Heart right ventricle (tissue), 16 donors: ENCODE measurements at regions of chr17 and their contacts with region 1.

Region 1: DNA sequence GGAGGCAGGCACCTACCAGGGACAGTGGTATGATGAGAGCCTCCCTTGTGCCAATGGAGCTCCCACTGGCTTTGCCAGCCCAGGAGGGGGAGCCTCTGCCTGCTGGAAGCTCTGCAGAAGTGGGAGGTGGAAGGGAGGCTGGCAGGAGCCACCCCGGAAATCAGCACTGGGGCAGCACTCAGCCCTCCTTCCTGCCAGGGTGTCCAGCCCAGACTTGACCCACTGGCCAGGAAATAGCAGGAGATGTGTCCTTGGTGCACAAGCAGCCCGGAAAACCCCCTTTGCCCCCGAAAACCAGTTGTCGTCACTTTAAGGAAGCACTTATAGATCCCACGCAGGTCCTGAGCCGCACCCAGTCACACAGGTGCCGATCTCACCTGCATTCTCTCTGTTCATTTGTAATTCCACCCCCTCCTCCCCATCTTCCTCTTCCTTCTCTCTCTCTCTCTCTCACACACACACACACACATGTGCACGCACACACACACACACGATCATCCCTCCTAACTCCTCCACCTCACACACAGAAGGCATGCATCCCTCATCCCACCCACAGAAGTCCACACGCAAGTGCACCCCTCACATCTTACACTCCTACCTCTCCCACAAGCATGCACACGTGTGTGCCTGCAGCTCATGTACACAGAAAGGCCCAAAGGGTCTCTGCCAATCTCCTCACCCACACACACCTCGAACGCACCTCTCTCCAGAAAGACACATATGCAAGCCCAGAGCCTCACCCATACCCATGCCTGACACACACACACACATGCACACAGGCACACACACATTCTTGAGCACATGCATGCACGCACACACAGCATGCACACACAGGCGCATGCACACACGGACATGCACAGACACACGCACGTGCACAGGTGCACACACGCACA is 49.1 kb upstream of the CACNG4 start:
- DNase-seq: no peak
- ATAC-seq: peak in 3 of 8 donors; percentile 48 to 63 (median 57)
- H3K4me3 ChIP-seq: no peak overlapping the region
- H3K27ac ChIP-seq: no peak overlapping the region
- H3K4me1 ChIP-seq: no peaks in the 10 kb centered on the region
- H3K27me3 ChIP-seq: peaks cover 0 to 31% (median 9%) of the 10 kb centered on the region in 7 donors
- CTCF ChIP-seq: peak in 5 of 9 donors; percentile 6 to 39 (median 26)

Region 2: GRCh38 chr17:66200685-66201092 is 714.8 kb before region 1 on chr17:
- intact Hi-C with region 1: no loop called
- DNase-seq: peak in 1 of 2 donors; percentile 29
- ATAC-seq: peak in 3 of 8 donors; percentile 27 to 52 (median 45)
- H3K4me3 ChIP-seq: no peak overlapping the region
- H3K27ac ChIP-seq: no peak overlapping the region
- H3K4me1 ChIP-seq: no peaks in the 10 kb centered on the region
- H3K27me3 ChIP-seq: no peaks in the 10 kb centered on the region
- CTCF ChIP-seq: peak; percentile 33 to 71 (median 54)

Region 3: GRCh38 chr17:67157732-67158639 is 242.5 kb after region 1 on chr17:
- intact Hi-C with region 1: loop called in 1 of 10 experiments (anchors 10 kb)
- DNase-seq: no peak
- ATAC-seq: peak in 5 of 8 donors; percentile 29 to 72 (median 57)
- H3K4me3 ChIP-seq: no peak overlapping the region
- H3K27ac ChIP-seq: no peak overlapping the region
- H3K4me1 ChIP-seq: peaks cover 0 to 11% (median 0%) of the 10 kb centered on the region in 9 donors
- H3K27me3 ChIP-seq: no peaks in the 10 kb centered on the region
- CTCF ChIP-seq: peak in 7 of 9 donors; percentile 15 to 47 (median 40)